Brain microvascular endothelial cell (primary cell): ENCODE measurements at regions of chr6 and their contacts with region 1.

Region 1: DNA sequence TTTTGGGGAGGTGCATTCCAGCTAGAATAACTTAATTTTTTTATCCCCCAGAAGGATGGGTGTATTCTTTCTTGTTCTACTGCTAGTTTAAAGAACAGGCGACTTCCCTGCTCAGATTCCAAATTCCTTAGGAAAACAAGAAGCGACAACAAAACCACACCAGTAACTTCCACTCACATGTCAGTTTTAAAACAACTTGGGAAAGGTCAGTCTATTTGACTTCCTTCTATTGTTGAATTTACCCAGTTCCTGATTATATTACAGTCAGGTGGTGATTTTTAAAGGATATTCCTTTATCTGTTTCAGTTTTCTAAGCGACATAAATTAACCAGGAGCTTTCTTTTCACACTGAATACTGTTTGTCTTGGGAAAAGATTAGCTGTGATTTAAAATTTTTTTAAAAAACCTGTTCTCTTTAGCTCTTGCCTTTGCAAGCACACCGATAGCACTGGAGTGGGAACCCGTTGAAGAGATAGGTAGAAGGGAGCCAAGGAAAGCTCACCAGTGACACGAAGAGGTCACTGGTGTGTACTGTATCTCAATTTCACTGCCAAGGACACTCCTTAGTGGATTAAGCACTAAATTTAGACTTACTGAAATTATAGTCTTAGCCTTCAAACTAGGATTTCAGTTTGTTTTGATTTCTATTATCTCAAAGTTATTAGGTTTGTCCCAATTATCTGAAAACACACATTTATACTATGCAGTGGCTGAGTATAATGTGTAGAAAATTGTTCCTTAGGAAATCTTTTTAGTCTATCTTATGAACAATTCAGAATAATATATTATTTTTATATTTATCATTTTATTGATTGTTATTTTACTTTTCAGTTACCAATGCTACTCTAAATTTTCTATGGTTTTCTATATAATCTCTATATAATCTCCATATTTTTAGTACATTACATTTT is 22.3 kb downstream of the MARCKS start:
- DNase-seq: peak; percentile 82
- H3K4me3 ChIP-seq: no peak overlapping the region
- H3K27ac ChIP-seq: peak overlapping the region; percentile 36
- H3K27me3 ChIP-seq: no peaks in the 10 kb centered on the region
- CTCF ChIP-seq: peak; percentile 84

Region 2: DNA sequence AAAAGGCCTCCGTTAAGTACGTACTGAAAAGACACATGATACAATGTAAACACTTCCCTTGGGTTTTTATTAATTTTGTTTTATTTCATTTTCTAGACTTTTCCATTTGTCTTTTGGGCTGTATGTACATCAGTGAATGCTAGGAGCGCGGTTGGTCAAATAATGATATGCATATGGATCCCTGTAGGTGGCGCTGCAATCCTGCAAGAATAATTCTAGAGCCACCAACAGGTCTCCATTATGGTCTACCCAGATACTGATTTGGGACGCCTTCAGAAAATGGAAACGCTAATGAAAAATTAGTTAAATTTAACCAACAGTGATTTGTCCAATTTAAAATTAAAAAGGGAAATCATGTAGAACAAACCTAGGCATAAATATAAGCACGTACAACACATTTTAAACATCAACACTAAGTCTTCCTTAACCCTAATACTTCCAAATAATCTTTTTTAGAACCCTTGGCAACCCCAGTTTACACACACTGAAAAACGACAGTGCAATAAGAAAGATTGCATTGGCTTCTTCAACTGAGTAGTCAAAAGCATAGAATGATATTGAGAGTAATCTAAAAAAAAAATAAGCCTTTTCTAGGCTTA is 1098.8 kb before region 1 on chr6:
- in situ Hi-C with region 1: loop called (anchors 25 kb)
- DNase-seq: peak; percentile 83
- H3K4me3 ChIP-seq: no peak overlapping the region
- H3K27ac ChIP-seq: peak overlapping the region; percentile 51
- H3K27me3 ChIP-seq: no peaks in the 10 kb centered on the region
- CTCF ChIP-seq: peak; percentile 75

Region 3: DNA sequence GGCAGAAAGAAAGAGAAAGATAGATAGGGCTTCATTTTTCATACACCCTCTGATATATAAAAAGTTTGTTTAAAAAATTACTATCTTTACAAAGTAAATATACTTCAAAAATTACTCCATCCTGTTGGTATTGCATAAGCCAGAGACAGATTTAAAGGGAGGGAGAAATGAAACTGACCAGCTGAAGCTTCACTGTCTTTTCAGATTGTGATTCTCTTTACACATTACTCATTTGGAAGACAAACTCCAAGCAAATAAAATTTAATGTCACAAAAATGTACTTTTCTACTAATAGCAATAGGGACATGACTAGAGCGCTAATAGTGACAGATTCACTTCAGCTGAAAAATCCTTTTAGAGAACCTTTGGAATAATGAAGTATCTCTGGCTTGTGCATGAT is 60.9 kb before region 1 on chr6:
- in situ Hi-C with region 1: no loop called
- DNase-seq: no peak
- H3K4me3 ChIP-seq: no peak overlapping the region
- H3K27ac ChIP-seq: no peak overlapping the region
- H3K27me3 ChIP-seq: no peaks in the 10 kb centered on the region
- CTCF ChIP-seq: no peak